ENCODE measurements at regions of chr12 and their contacts with region 1.

Region 1: GRCh38 chr12:12916135-12916944 is 25.0 kb downstream of the GPRC5A start:
- DNase-seq: peak; percentile 72 to 89 (median 83)
- ATAC-seq: peak; percentile 99
- H3K4me3 ChIP-seq: no peak overlapping the region
- H3K4me3 Mint-ChIP-seq: no peak overlapping the region
- H3K27ac ChIP-seq: no peak overlapping the region
- H3K27ac Mint-ChIP-seq: no peak overlapping the region
- H3K4me1 ChIP-seq: peaks cover 7% of the 10 kb centered on the region
- H3K4me1 Mint-ChIP-seq: peaks cover 7% of the 10 kb centered on the region
- H3K27me3 ChIP-seq: peaks cover 0 to 4% of the 10 kb centered on the region in 2 experiments
- H3K27me3 Mint-ChIP-seq: peaks cover 12% of the 10 kb centered on the region
- CTCF ChIP-seq: peak; percentile 92

Region 2: DNA sequence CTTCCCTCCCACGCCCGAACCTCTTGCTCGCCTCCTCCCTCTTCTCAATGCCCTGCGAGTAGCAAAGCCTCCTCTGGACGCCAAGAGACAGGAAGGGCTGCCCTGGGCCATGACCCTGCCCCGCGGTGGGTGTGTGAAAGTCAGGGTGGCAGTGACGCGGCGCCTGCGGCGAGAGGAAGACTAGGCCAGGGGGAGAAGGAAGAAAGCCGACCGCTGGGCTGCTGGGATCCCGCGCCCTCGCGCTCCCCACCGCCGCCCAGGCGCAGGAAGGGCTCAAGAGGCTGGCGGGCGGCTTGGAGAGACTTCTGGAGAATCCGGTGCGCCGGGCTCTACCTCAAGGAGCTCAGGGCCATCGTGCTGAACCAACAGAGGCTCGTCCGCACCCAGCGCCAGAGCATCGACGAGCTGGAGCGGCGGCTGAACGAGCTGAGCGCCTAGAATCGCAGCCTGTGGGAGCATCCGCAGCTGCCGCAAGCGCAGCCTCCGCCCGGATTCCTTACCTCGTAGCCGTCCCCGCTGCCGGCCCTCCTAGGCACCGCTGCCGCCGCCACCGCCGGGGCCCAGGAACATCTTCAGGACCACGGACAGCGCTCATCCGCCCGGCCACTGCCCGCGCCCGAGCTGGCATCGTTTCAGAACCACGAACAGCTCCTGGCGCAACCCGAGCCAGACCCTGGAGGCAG is 1416.0 kb before region 1 on chr12:
- CTCF ChIA-PET with region 1: no interaction called
- POLR2A ChIA-PET with region 1: no interaction called
- intact Hi-C with region 1: no loop called
- DNase-seq: peak; percentile 63 to 89 (median 72)
- ATAC-seq: peak; percentile 91
- H3K4me3 ChIP-seq: no peak overlapping the region
- H3K4me3 Mint-ChIP-seq: no peak overlapping the region
- H3K27ac ChIP-seq: no peak overlapping the region
- H3K27ac Mint-ChIP-seq: no peak overlapping the region
- H3K4me1 ChIP-seq: peaks cover 12% of the 10 kb centered on the region
- H3K4me1 Mint-ChIP-seq: no peaks in the 10 kb centered on the region
- H3K27me3 ChIP-seq: peaks cover 5 to 18% of the 10 kb centered on the region in 2 experiments
- H3K27me3 Mint-ChIP-seq: peaks cover 50% of the 10 kb centered on the region
- CTCF ChIP-seq: no peak

Region 3: GRCh38 chr12:12837025-12837872 is 79.1 kb before region 1 on chr12:
- CTCF ChIA-PET with region 1: interaction called, 3 read pairs
- POLR2A ChIA-PET with region 1: no interaction called
- intact Hi-C with region 1: loop called in 1 of 2 experiments (anchors 2 kb)
- DNase-seq: peak in 11 of 14 experiments; percentile 5 to 68 (median 36)
- ATAC-seq: peak; percentile 72
- H3K4me3 ChIP-seq: no peak overlapping the region
- H3K4me3 Mint-ChIP-seq: peak overlapping the region; percentile 30
- H3K27ac ChIP-seq: no peak overlapping the region
- H3K27ac Mint-ChIP-seq: peak overlapping the region; percentile 92
- H3K4me1 ChIP-seq: peaks cover 4% of the 10 kb centered on the region
- H3K4me1 Mint-ChIP-seq: peaks cover 34% of the 10 kb centered on the region
- H3K27me3 ChIP-seq: no peaks in the 10 kb centered on the region
- H3K27me3 Mint-ChIP-seq: no peaks in the 10 kb centered on the region
- CTCF ChIP-seq: peak; percentile 69

Region 4: DNA sequence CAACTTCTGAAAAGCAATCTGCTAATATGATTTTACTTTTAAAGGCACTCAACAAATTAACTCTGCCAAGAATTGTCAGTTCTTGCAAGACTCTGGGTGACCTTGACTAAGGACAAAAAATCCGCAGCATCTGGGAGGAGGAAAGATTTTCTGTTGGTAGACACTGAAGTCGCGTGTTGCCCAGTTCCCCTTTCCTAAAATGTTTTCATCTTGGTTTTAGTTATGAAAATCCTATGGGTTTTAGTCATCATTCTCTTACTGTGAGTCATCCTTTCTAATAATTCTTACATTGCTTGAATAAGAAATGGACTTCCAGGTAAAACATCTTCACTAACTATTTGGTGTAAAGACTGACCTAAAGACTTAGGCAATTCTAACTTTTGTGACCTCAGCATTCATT is 178.0 kb after region 1 on chr12:
- CTCF ChIA-PET with region 1: no interaction called
- POLR2A ChIA-PET with region 1: no interaction called
- intact Hi-C with region 1: loop called (anchors 2 kb)
- DNase-seq: peak in 2 of 14 experiments; percentile 52 to 61
- ATAC-seq: no peak
- H3K4me3 ChIP-seq: no peak overlapping the region
- H3K4me3 Mint-ChIP-seq: no peak overlapping the region
- H3K27ac ChIP-seq: no peak overlapping the region
- H3K27ac Mint-ChIP-seq: no peak overlapping the region
- H3K4me1 ChIP-seq: peaks cover 16% of the 10 kb centered on the region
- H3K4me1 Mint-ChIP-seq: peaks cover 19% of the 10 kb centered on the region
- H3K27me3 ChIP-seq: no peaks in the 10 kb centered on the region
- H3K27me3 Mint-ChIP-seq: no peaks in the 10 kb centered on the region
- CTCF ChIP-seq: no peak

Region 5: DNA sequence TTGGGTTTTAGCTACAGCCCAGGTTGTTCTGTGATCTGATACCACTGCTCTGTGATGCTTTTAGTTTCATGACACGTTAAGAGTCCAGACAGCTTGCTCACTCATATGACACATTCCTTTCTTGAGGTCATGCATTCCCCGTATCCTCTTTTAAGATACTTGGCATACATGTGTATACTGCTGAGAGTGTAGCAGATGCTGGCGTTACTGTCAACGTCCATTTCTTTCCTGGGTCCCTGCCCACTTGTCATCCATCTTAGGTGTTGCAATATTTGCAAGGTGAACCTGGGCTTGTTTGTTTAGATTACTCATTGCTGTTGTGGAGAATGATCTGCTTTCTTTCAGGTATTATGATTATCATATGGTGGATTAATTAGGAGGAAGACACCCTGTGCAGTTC is 271.1 kb after region 1 on chr12:
- CTCF ChIA-PET with region 1: no interaction called
- POLR2A ChIA-PET with region 1: no interaction called
- intact Hi-C with region 1: no loop called
- DNase-seq: no peak
- ATAC-seq: no peak
- H3K4me3 ChIP-seq: no peak overlapping the region
- H3K4me3 Mint-ChIP-seq: no peak overlapping the region
- H3K27ac ChIP-seq: no peak overlapping the region
- H3K27ac Mint-ChIP-seq: no peak overlapping the region
- H3K4me1 ChIP-seq: no peaks in the 10 kb centered on the region
- H3K4me1 Mint-ChIP-seq: no peaks in the 10 kb centered on the region
- H3K27me3 ChIP-seq: no peaks in the 10 kb centered on the region
- H3K27me3 Mint-ChIP-seq: no peaks in the 10 kb centered on the region
- CTCF ChIP-seq: no peak

Region 6: GRCh38 chr12:13211859-13212664 is 295.7 kb after region 1 on chr12:
- CTCF ChIA-PET with region 1: interaction called, 16 read pairs
- POLR2A ChIA-PET with region 1: interaction called, 7 read pairs
- intact Hi-C with region 1: loop called (anchors 1 kb)
- DNase-seq: peak; percentile 55 to 87 (median 66)
- ATAC-seq: peak; percentile 84
- H3K4me3 ChIP-seq: no peak overlapping the region
- H3K4me3 Mint-ChIP-seq: no peak overlapping the region
- H3K27ac ChIP-seq: no peak overlapping the region
- H3K27ac Mint-ChIP-seq: no peak overlapping the region
- H3K4me1 ChIP-seq: peaks cover 6% of the 10 kb centered on the region
- H3K4me1 Mint-ChIP-seq: peaks cover 7% of the 10 kb centered on the region
- H3K27me3 ChIP-seq: no peaks in the 10 kb centered on the region
- H3K27me3 Mint-ChIP-seq: no peaks in the 10 kb centered on the region
- CTCF ChIP-seq: peak; percentile 89

Region 7: GRCh38 chr12:13661005-13661887 is 744.9 kb after region 1 on chr12:
- CTCF ChIA-PET with region 1: no interaction called
- POLR2A ChIA-PET with region 1: no interaction called
- intact Hi-C with region 1: loop called in 1 of 2 experiments (anchors 5 kb)
- DNase-seq: peak in 4 of 14 experiments; percentile 6 to 24 (median 8)
- ATAC-seq: peak; percentile 39
- H3K4me3 ChIP-seq: no peak overlapping the region
- H3K4me3 Mint-ChIP-seq: no peak overlapping the region
- H3K27ac ChIP-seq: no peak overlapping the region
- H3K27ac Mint-ChIP-seq: no peak overlapping the region
- H3K4me1 ChIP-seq: no peaks in the 10 kb centered on the region
- H3K4me1 Mint-ChIP-seq: no peaks in the 10 kb centered on the region
- H3K27me3 ChIP-seq: no peaks in the 10 kb centered on the region
- H3K27me3 Mint-ChIP-seq: peaks cover 4% of the 10 kb centered on the region
- CTCF ChIP-seq: peak; percentile 62

Measured in CD4-positive, alpha-beta T cell (primary cell).